ENCODE measurements at regions of chr3 and their contacts with region 1.

Region 1: GRCh38 chr3:160906646-160907045 is 150.6 kb downstream of the PPM1L start:
- DNase-seq: no peak
- H3K4me3 ChIP-seq: no peak overlapping the region
- H3K27ac ChIP-seq: no peak overlapping the region
- H3K4me1 ChIP-seq: no peaks in the 10 kb centered on the region
- H3K27me3 ChIP-seq: no peaks in the 10 kb centered on the region
- CTCF ChIP-seq: no peak
- EP300 ChIP-seq: no peak
- RAD21 ChIP-seq: no peak

Region 2: GRCh38 chr3:160885791-160886286 is 20.8 kb before region 1 on chr3:
- CTCF ChIA-PET with region 1: no interaction called
- POLR2A ChIA-PET with region 1: no interaction called
- DNase-seq: no peak
- H3K4me3 ChIP-seq: no peak overlapping the region
- H3K27ac ChIP-seq: no peak overlapping the region; a peak in 1 of 4 replicates
- H3K4me1 ChIP-seq: peaks cover 0 to 8% of the 10 kb centered on the region in 2 experiments; a peak in 1 of 4 replicates
- H3K27me3 ChIP-seq: no peaks in the 10 kb centered on the region
- CTCF ChIP-seq: no peak
- EP300 ChIP-seq: no peak
- RAD21 ChIP-seq: no peak

Region 3: DNA sequence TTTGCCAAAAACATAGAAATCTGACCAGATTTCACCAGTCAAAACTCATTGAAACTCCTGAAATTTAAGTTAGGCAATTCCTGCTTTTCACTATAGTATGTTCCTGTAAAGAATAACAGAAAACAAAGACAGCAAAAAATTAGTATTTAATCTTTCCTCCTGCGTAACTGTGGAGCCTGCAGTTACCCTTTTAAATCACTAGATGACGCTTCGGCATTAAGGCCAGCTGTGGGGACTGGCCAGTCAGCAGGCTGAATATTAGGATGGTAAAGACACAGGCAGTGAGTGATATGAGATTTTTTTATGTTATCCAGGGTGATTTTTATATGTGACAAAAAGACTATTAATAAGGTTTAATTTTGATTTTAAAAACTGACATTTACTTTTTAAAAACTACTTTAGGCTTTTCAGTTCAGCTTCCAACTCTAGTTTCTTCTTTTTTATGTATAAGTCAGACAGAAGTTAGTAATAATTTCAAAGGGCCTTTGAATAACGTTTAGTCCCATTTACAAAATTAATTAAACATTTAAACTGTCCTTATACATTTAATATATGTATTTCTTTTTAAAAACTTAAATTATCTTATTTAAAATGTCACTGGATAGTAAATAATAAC is 14.5 kb after region 1 on chr3:
- CTCF ChIA-PET with region 1: interaction called, 13 read pairs
- POLR2A ChIA-PET with region 1: no interaction called
- DNase-seq: peak; percentile 58
- H3K4me3 ChIP-seq: peak overlapping the region in 1 of 2 experiments; percentile 31; a peak in 1 of 4 replicates
- H3K27ac ChIP-seq: no peak overlapping the region
- H3K4me1 ChIP-seq: no peaks in the 10 kb centered on the region; a peak in 1 of 4 replicates
- H3K27me3 ChIP-seq: no peaks in the 10 kb centered on the region
- CTCF ChIP-seq: peak; percentile 88
- EP300 ChIP-seq: no peak
- RAD21 ChIP-seq: peak; percentile 89

Region 4: GRCh38 chr3:161035711-161036110 is 129.1 kb after region 1 on chr3:
- CTCF ChIA-PET with region 1: no interaction called
- POLR2A ChIA-PET with region 1: no interaction called
- DNase-seq: no peak
- H3K4me3 ChIP-seq: no peak overlapping the region
- H3K27ac ChIP-seq: no peak overlapping the region
- H3K4me1 ChIP-seq: no peaks in the 10 kb centered on the region
- H3K27me3 ChIP-seq: no peaks in the 10 kb centered on the region
- CTCF ChIP-seq: no peak
- EP300 ChIP-seq: no peak
- RAD21 ChIP-seq: no peak

Measured in SK-N-SH (cell line).